Activated CD8-positive, alpha-beta memory T cell treated with anti-CD3 and anti-CD28 coated beads, Interleukin-2, amount 10 ng/mL, durations not matched to agents 7 days and 5 days (primary cell): ENCODE measurements at regions of chr5 and their contacts with region 1.

Region 1: DNA sequence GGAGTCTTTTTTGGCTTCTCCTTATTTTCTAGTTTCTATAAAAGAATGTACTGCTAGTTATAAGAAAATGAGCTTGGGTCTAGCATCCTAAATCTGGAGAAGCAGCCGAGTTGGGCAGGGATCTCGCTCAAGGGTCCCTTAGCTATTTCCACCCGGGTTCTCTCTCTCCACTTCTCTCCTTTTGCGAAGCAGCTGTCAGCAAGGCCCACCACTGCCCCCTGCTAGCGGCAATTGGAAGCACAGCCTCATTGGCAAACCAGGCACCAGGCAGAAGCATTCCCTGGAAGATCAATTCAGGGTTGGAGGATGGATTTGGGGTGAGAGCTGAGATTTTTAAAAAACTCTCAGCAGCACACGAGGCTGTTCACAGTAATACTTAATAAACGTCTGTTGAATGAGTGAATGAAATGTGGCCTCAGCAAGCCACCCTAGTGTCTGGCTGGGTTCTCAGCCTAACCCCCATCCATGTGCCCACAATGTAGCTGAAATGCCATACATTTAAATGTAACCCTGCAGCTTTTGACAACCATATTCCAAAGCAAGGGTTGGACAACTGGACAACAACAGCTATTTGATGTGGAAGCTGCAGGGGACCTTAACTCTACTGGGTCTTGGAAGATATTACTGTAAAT is 34.6 kb upstream of the TNIP1 start:
- DNase-seq: peak; percentile 77
- ATAC-seq: peak; percentile 68
- H3K4me3 Mint-ChIP-seq: no peak overlapping the region
- H3K27ac Mint-ChIP-seq: no peak overlapping the region
- H3K4me1 Mint-ChIP-seq: no peaks in the 10 kb centered on the region
- H3K27me3 Mint-ChIP-seq: no peaks in the 10 kb centered on the region

Region 2: GRCh38 chr5:150758531-150759333 is 356.7 kb before region 1 on chr5 and contains the start of gene DCTN4:
- CTCF ChIA-PET with region 1: no interaction called
- DNase-seq: peak; percentile 96
- ATAC-seq: peak; percentile 97
- H3K4me3 Mint-ChIP-seq: no peak within 1 kb of the TSS
- H3K27ac Mint-ChIP-seq: no peak within 1 kb of the TSS
- H3K4me1 Mint-ChIP-seq: peaks cover 23% of the 10 kb centered on the region
- H3K27me3 Mint-ChIP-seq: no peaks in the 10 kb centered on the region
- total RNA-seq, gene DCTN4: 41.9 to 46.1 TPM

Region 3: DNA sequence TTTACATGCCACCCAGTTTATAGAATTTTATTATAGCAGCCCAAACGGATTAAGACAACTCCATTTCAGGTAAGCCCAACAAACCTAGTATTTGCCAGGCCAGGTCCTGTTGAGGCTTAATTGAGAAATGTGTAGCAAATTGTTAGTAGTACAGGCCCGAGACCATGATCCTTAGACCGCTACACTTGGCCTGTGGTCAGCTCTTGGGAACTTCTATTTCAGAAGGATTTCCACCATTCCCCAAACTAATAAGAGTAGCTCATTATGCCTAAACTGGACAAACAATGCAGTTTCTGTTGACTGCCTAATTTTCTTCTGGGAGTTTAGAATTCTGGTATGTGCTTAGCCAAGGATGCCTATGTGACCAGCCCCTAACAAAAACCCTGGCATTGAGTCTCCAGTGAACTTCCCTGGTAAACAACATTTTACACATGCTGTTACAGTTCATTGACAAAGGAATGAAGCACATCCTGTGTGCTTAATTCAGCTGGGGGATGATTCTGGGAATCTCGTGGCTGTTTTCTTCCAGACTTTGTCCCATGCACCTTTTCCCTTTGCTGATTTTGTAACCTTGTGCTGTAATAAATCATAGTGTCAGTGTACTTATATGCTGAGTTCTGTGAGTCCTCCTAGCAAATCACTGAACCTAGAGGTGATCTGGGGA is 100.6 kb before region 1 on chr5:
- CTCF ChIA-PET with region 1: no interaction called
- DNase-seq: no peak
- ATAC-seq: no peak
- H3K4me3 Mint-ChIP-seq: no peak overlapping the region
- H3K27ac Mint-ChIP-seq: no peak overlapping the region
- H3K4me1 Mint-ChIP-seq: peaks cover 7% of the 10 kb centered on the region
- H3K27me3 Mint-ChIP-seq: peaks cover 2% of the 10 kb centered on the region

Region 4: GRCh38 chr5:151051066-151051930 is 64.1 kb before region 1 on chr5:
- CTCF ChIA-PET with region 1: interaction called, 182 read pairs
- DNase-seq: peak; percentile 85
- ATAC-seq: peak; percentile 89
- H3K4me3 Mint-ChIP-seq: no peak overlapping the region
- H3K27ac Mint-ChIP-seq: peak overlapping the region; percentile 9
- H3K4me1 Mint-ChIP-seq: peaks cover 14% of the 10 kb centered on the region
- H3K27me3 Mint-ChIP-seq: no peaks in the 10 kb centered on the region

Region 5: GRCh38 chr5:151080623-151081430 is 34.6 kb before region 1 on chr5 and contains the start of gene TNIP1:
- CTCF ChIA-PET with region 1: interaction called, 39 read pairs
- DNase-seq: peak; percentile 94
- ATAC-seq: peak; percentile 89
- H3K4me3 Mint-ChIP-seq: peak within 1 kb of the TSS; percentile 78
- H3K27ac Mint-ChIP-seq: peak within 1 kb of the TSS; percentile 78
- H3K4me1 Mint-ChIP-seq: peaks cover 78% of the 10 kb centered on the region
- H3K27me3 Mint-ChIP-seq: no peaks in the 10 kb centered on the region
- total RNA-seq, gene TNIP1: 136 to 201 TPM

Region 6: GRCh38 chr5:151126199-151126645 is 10.8 kb after region 1 on chr5:
- CTCF ChIA-PET with region 1: interaction called, 57 read pairs
- DNase-seq: peak; percentile 75
- ATAC-seq: peak; percentile 63
- H3K4me3 Mint-ChIP-seq: no peak overlapping the region
- H3K27ac Mint-ChIP-seq: peak overlapping the region; percentile 75
- H3K4me1 Mint-ChIP-seq: peaks cover 39% of the 10 kb centered on the region
- H3K27me3 Mint-ChIP-seq: no peaks in the 10 kb centered on the region

Region 7: GRCh38 chr5:151150471-151151262 is 35.3 kb after region 1 on chr5:
- CTCF ChIA-PET with region 1: interaction called, 12 read pairs
- DNase-seq: peak; percentile 92
- ATAC-seq: peak; percentile 74
- H3K4me3 Mint-ChIP-seq: peak overlapping the region; percentile 62
- H3K27ac Mint-ChIP-seq: peak overlapping the region; percentile 89
- H3K4me1 Mint-ChIP-seq: peaks cover 86% of the 10 kb centered on the region
- H3K27me3 Mint-ChIP-seq: no peaks in the 10 kb centered on the region

Region 8: DNA sequence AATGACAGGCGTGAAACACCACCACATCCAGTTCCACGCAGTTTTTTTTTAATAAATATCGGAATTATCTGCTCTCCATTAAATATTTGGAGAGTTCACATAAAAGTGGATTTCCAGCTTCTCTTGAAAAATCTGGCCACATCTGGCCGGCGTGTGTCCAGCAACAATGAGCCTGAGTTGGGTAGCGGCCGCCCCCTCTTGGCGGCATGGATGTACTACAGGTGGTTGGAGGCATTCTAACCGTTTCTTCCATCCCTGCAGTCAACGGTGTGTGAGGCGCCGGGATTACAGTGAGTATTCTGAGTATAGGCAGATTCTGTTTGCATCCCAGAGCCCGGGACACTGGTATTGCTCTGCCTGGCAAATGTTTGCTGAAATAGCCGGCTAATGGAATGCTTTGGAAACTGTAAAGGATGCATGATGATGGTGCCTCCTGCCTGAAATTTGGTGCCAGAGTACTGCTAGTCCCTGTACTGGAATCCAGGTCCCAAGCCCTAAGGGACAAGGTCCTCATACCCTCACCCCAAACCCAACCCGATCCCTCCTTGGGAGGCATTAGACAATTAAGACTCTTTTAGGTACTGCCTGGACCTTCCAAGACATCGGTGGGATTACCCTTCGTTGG is 124.0 kb after region 1 on chr5:
- CTCF ChIA-PET with region 1: interaction called, 24 read pairs
- DNase-seq: peak; percentile 73
- ATAC-seq: peak; percentile 73
- H3K4me3 Mint-ChIP-seq: peak overlapping the region; percentile 63
- H3K27ac Mint-ChIP-seq: peak overlapping the region; percentile 33
- H3K4me1 Mint-ChIP-seq: peaks cover 56% of the 10 kb centered on the region
- H3K27me3 Mint-ChIP-seq: no peaks in the 10 kb centered on the region